Endothelial cell of umbilical vein (primary cell): ENCODE measurements at regions of chr15 and their contacts with region 1.

Region 1: DNA sequence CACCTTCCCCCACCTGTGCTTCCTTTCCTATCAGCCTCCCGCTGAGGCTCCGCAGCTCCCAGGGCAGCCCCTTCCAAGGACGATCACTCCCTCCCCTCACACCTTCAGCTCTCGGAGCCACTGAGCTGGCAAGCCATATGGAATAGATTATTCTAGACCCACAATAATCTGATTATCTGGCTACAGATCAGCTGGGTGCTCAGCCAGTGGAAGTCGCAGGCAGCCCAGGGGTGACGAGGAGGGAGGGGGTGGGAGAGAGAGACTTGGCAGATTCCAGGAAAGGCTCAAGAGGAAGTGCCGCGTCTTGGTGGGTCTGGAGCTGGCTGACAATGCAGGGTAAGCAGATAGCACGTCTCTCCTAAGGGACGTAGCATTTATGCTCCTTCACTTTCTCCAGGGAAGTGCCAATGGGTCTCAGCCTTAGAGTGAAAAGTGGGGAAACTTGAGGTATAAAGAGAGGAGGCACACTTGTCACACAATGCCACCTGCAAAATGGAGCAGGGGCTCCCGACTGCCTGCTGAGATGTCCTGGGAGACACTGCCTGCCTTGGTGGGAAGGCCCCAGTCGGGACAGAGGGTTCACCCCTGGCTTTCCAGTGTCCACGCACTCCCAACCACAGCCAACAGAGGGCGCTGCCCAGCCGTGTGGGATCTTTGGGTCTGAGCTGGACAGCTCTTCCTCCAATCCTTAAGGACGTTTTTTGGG is 9.4 kb upstream of the MESP1 start:
- DNase-seq: peak; percentile 71
- H3K4me3 ChIP-seq: no peak overlapping the region
- H3K27ac ChIP-seq: no peak overlapping the region
- H3K4me1 ChIP-seq: no peaks in the 10 kb centered on the region
- H3K27me3 ChIP-seq: peaks cover 0 to 5% of the 10 kb centered on the region in 2 experiments
- CTCF ChIP-seq: peak; percentile 93 to 98
- POLR2A ChIP-seq: no peak

Region 2: GRCh38 chr15:89781891-89782618 is 21.6 kb after region 1 on chr15:
- CTCF ChIA-PET with region 1: interaction called, 38 read pairs
- POLR2A ChIA-PET with region 1: no interaction called
- dilution Hi-C with region 1: no loop called
- intact Hi-C with region 1: no loop called
- DNase-seq: no peak
- H3K4me3 ChIP-seq: no peak overlapping the region
- H3K27ac ChIP-seq: no peak overlapping the region
- H3K4me1 ChIP-seq: peaks cover 4% of the 10 kb centered on the region
- H3K27me3 ChIP-seq: no peaks in the 10 kb centered on the region
- CTCF ChIP-seq: no peak
- POLR2A ChIP-seq: no peak

Region 3: GRCh38 chr15:89812011-89812835 is 51.8 kb after region 1 on chr15:
- CTCF ChIA-PET with region 1: interaction called, 13 read pairs
- POLR2A ChIA-PET with region 1: interaction called, 5 read pairs
- dilution Hi-C with region 1: no loop called
- intact Hi-C with region 1: no loop called
- DNase-seq: no peak
- H3K4me3 ChIP-seq: no peak overlapping the region
- H3K27ac ChIP-seq: no peak overlapping the region
- H3K4me1 ChIP-seq: peaks cover 36% of the 10 kb centered on the region
- H3K27me3 ChIP-seq: no peaks in the 10 kb centered on the region
- CTCF ChIP-seq: no peak
- POLR2A ChIP-seq: no peak

Region 4: DNA sequence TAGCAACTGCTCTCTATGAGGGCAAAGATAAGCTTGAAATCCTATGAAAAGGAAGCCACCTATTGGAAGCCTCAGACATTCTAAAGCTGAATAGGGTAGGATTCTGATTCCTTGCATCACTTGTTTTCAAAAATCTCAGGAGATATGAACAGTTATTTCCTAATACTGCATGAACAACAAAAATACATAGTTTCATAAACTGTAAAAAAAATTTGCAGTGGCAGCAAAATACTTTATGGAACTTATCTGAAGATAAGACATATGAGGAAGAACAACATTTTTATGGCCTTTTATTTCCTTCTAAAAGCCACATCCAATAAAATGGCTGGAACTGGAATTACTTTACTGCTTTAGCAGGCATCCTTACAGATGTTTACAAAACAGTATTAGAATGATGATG is 103.5 kb after region 1 on chr15:
- CTCF ChIA-PET with region 1: interaction called, 16 read pairs
- POLR2A ChIA-PET with region 1: no interaction called
- dilution Hi-C with region 1: loop called (anchors 25 kb)
- intact Hi-C with region 1: no loop called
- DNase-seq: no peak
- H3K4me3 ChIP-seq: no peak overlapping the region
- H3K27ac ChIP-seq: no peak overlapping the region
- H3K4me1 ChIP-seq: no peaks in the 10 kb centered on the region
- H3K27me3 ChIP-seq: no peaks in the 10 kb centered on the region
- CTCF ChIP-seq: no peak
- POLR2A ChIP-seq: no peak

Region 5: GRCh38 chr15:89893696-89894455 is 133.4 kb after region 1 on chr15 and contains the start of gene AP3S2:
- CTCF ChIA-PET with region 1: interaction called, 210 read pairs
- POLR2A ChIA-PET with region 1: no interaction called
- dilution Hi-C with region 1: no loop called
- intact Hi-C with region 1: no loop called
- DNase-seq: peak; percentile 92
- H3K4me3 ChIP-seq: peak within 1 kb of the TSS; percentile 77 to 96 (median 86)
- H3K27ac ChIP-seq: peak within 1 kb of the TSS; percentile 69
- H3K4me1 ChIP-seq: peaks cover 5% of the 10 kb centered on the region
- H3K27me3 ChIP-seq: no peaks in the 10 kb centered on the region
- CTCF ChIP-seq: no peak
- POLR2A ChIP-seq: peak; percentile 85
- total RNA-seq, gene AP3S2: 20.4 and 31.1 TPM in 2 replicates

Region 6: DNA sequence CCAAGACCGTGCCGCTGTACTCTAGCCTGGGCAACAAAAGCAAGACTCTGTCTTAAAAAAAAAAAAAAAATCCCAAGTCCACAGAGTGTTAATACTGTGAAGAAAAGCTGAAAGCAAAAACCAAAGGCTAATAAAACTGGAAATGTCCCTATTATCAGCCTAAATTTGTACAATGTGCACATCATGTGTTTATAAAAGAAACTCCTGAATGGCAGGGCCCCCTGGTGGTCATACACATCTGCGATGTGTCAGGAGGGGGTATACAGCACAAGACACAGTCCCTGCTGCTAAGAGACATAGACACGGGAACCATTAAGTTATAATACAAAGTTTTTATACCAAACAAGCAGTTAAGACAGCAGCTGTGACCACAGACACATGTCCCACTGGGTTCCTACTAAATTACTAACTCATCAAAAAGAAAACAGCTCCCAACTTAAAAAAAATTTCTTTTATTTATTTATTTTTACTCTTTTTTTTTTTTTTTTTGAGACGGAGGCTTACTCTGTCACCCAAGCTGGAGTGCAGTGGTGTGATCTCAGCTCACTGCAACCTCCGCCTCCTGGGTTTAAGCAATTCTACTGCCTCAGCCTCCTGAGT is 310.9 kb after region 1 on chr15:
- CTCF ChIA-PET with region 1: interaction called, 17 read pairs
- POLR2A ChIA-PET with region 1: no interaction called
- dilution Hi-C with region 1: no loop called
- intact Hi-C with region 1: no loop called
- DNase-seq: peak; percentile 85
- H3K4me3 ChIP-seq: no peak overlapping the region
- H3K27ac ChIP-seq: no peak overlapping the region
- H3K4me1 ChIP-seq: no peaks in the 10 kb centered on the region
- H3K27me3 ChIP-seq: no peaks in the 10 kb centered on the region
- CTCF ChIP-seq: peak; percentile 64 to 87
- POLR2A ChIP-seq: no peak